Posterior cingulate gyrus (tissue), 11 donors: ENCODE measurements at regions of chr9 and their contacts with region 1.

Region 1: DNA sequence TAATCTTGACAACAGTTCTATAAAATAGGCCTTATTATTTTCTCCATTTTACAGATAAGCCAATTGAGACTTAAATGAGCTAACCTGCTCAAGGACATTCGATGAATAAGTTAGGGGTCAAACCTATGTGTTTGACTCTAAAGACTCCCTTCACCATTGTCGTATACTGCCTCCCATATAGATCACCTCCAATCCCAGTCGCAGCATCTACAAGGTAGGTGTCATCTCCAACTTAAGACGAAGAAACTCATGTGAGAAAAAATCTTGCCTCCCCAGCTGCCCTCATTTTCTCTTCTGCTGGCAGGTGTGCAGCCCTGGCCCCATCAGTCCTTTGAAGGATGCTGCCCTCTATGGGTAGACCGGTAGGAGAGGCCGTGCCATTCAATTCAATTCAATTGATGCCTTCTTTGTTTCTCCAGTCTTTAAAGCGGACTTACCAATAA is 75.2 kb upstream of the SMARCA2 start:
- DNase-seq: peak in 5 of 10 donors; percentile 29 to 80 (median 65)

Region 2: DNA sequence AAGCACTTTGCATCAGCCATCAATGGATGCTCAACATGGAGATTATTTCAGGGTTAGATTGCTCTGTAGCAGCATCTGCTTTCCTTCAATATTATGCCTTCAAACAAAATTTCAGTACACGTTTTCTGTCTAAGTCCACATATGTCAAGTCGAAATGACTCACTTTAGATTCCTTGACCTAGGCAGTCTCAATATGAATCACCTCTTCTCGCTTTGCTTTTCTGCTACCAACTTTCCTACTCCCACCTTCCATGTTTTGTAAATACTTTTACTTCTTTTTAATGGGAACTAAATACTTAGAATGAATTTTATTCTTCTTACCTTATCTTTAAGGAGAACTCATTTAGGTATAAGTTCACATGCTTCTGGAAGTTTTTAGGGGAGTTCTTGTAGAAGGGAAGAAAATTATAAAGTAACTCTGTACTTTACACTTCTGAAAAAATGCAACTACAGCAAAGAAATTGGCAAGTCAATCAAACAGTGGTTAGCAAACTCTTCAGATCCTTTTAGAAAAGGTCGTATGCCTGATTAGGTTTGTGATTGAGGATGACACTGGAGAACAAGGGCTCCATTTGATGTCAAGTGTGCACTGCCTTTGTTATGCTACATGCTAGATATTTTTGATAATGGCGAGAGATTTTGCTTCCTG is 403.3 kb before region 1 on chr9:
- intact Hi-C with region 1: no loop called
- DNase-seq: no peak

Region 3: DNA sequence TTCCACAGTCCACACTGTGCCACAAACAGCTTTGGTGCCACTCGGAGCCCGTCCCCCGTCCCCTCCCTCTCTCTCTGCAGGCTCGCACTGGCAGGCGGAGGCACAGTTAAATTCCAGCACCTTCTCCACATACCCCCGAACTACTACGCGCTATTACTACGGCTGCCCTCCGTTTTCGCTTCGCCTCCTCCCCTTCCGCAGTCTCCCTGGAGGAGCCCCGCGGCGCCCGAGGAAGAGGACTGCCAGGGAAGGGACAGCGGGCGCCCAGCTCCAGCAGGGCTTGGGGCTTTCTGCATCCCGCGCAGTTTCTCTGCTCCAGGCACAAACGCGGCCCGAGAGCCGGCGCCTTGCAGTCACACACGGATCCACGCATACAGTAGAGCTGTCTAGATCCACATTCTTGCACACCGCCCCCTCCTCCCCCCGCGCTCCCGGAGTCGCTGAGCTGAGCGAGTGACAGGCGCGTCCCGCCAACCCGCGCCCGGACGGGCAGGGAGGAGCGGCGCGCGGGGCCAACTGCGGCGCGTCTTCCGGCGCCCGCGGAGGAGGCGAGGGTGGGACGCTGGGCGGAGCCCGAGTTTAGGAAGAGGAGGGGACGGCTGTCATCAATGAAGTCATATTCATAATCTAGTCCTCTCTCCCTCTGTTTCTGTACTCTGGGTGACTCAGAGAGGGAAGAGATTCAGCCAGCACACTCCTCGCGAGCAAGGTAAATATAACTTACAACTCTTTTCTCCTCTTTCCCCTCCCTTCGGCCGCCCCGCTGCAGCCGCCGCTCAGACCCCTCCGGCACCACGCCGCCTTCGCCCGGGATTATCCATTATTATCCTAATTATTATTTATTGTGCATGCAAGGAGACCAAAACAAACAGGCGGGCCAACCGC is 75.0 kb after region 1 on chr9 and contains the start of gene SMARCA2:
- intact Hi-C with region 1: no loop called
- DNase-seq: peak; percentile 93 to 100 (median 99)

Region 4: GRCh38 chr9:2072752-2073405 is 132.9 kb after region 1 on chr9:
- intact Hi-C with region 1: loop called (anchors 10 kb)
- DNase-seq: no peak